Mammary epithelial cell (primary cell): ENCODE measurements at regions of chr15 and their contacts with region 1.

Region 1: DNA sequence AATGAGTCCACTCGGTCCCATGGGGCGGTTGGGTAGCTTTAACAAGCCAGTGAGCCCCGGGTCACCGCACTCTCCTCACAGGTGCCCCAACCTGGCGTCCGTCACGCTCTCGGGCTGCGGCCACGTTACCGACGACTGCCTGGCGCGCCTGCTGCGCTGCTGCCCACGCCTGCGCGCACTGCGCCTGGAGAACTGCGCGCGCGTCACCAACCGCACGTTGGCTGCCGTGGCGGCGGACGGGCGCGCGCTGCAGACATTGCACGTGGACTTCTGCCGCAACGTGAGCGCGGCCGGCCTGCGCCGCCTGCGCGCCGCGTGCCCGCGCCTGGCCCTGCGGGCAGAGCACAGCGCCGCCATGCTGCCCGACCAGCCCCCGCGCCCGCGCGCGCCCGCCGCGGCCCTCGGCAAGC is 3.4 kb downstream of the FBXL22 start:
- DNase-seq: peak; percentile 88
- H3K4me3 ChIP-seq: peak overlapping the region; percentile 64 to 76 (median 72)
- H3K27ac ChIP-seq: peak overlapping the region; percentile 38
- H3K4me1 ChIP-seq: peaks cover 32% of the 10 kb centered on the region
- H3K27me3 ChIP-seq: no peaks in the 10 kb centered on the region
- CTCF ChIP-seq: no peak

Region 2: DNA sequence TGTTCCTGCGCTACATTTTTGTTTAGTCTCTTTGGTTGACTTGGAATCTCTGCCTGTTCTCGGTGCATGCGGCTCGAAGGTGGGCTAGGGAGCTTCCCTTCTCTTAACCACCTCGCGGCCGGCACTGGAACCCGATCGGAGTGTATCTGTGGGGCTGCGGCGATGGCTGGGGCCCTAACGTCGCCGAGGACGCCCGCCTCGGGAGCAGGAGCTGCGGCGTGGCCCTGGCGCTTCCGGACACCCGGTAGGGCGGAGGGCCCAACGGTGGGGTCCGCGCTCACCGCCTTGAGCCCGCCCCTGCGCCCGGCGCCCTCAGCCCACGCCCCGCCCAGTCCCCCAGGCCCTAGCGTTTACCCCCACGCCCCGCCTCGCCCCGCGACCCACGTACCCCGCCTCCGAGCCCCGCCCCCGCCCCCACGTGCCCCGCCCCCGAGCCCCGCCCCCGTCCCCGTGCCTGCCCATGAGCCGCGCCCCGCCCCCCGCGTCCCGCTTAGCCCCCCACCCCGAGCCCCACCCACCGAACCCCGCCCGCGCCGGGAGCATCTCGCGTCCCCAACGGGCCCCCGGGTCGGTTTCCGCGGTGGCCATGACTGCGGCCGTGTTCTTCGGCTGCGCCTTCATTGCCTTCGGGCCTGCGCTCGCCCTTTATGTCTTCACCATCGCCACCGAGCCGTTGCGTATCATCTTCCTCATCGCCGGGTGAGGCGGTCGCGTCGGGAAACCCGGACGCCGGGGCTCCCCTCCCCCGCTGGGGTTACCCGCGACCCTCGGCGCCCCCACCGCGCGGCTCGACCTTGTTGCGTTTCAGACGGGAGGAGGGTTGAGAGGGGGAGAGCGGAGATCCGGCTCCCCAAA is 323.4 kb before region 1 on chr15 and contains the start of gene APH1B:
- CTCF ChIA-PET with region 1: no interaction called
- dilution Hi-C with region 1: no loop called
- in situ Hi-C with region 1: loop called in 1 of 2 experiments (anchors 25 kb)
- intact Hi-C with region 1: no loop called
- DNase-seq: peak; percentile 56
- H3K4me3 ChIP-seq: peak within 1 kb of the TSS; percentile 84 to 97 (median 85)
- H3K27ac ChIP-seq: peak within 1 kb of the TSS; percentile 66
- H3K4me1 ChIP-seq: peaks cover 13% of the 10 kb centered on the region
- H3K27me3 ChIP-seq: no peaks in the 10 kb centered on the region
- CTCF ChIP-seq: peak in 1 of 2 donors; percentile 10
- total RNA-seq, gene APH1B: 15.8 to 18.4 TPM

Region 3: GRCh38 chr15:63466378-63467192 is 134.0 kb before region 1 on chr15:
- CTCF ChIA-PET with region 1: interaction called, 7 read pairs
- dilution Hi-C with region 1: no loop called
- in situ Hi-C with region 1: loop called (anchors 10 kb)
- intact Hi-C with region 1: loop called (anchors 1 kb)
- DNase-seq: peak; percentile 56
- H3K4me3 ChIP-seq: no peak overlapping the region
- H3K27ac ChIP-seq: no peak overlapping the region
- H3K4me1 ChIP-seq: no peaks in the 10 kb centered on the region
- H3K27me3 ChIP-seq: no peaks in the 10 kb centered on the region
- CTCF ChIP-seq: peak; percentile 56 to 73

Region 4: GRCh38 chr15:63504247-63504978 is 96.2 kb before region 1 on chr15 and contains the start of gene USP3:
- CTCF ChIA-PET with region 1: no interaction called
- dilution Hi-C with region 1: no loop called
- in situ Hi-C with region 1: no loop called
- intact Hi-C with region 1: loop called (anchors 2 kb)
- DNase-seq: peak; percentile 95
- H3K4me3 ChIP-seq: peak within 1 kb of the TSS; percentile 74 to 95 (median 94)
- H3K27ac ChIP-seq: peak within 1 kb of the TSS; percentile 89
- H3K4me1 ChIP-seq: peaks cover 46% of the 10 kb centered on the region
- H3K27me3 ChIP-seq: no peaks in the 10 kb centered on the region
- CTCF ChIP-seq: no peak
- total RNA-seq, gene USP3: 26.3 to 30.6 TPM

Region 5: DNA sequence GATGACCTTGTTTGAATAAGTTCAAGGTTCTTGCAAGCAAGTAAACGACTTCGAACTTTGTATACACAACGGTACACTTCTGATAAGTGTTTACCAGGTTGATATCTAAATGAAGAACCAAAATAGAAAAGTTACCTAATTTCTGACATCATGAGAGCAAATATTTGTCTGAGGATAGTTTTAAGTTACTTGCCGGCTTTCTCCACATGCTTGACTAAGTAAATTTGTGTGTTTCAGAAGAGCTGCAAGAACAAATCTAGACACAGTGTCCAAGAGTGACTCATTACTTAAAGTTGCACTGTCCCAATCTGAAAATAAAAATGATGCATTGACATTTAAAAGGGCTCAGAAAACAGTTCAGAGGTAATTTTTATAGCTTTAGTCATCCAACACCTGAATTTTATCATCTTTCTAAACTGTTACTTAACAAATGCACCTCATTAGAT is 118.0 kb after region 1 on chr15:
- CTCF ChIA-PET with region 1: no interaction called
- dilution Hi-C with region 1: no loop called
- in situ Hi-C with region 1: loop called in 1 of 2 experiments (anchors 25 kb)
- intact Hi-C with region 1: no loop called
- DNase-seq: peak; percentile 62
- H3K4me3 ChIP-seq: no peak overlapping the region
- H3K27ac ChIP-seq: no peak overlapping the region
- H3K4me1 ChIP-seq: peaks cover 17% of the 10 kb centered on the region
- H3K27me3 ChIP-seq: no peaks in the 10 kb centered on the region
- CTCF ChIP-seq: no peak